HepG2 (cell line): ENCODE measurements at regions of chr2 and their contacts with region 1.

Region 1: DNA sequence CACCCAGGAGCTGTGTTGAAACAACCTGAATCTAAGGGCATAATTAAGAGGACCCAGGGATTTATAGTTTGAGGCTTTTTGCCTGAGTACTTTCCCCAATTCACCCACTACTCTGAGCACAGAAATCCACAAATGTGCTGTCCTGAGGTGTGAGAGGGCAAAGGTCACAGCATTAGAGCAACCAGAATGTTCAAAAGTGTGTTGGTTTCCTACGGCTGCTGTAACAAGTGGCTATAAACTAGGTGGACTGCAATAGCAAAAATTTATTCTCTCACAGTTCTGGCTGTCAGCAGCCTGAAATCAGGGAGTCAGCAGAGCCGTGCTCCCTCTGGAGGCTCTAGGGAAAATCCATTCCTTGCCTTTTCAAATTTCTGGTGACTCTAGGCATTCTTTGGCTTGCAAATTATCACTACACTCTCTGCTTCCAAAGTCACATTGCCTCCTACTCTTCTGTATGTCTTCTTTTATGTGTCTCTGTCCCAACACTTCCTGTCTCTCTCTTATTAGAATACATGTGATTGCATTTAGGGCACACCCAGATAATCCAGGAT is 91.4 kb upstream of the TACR1 start:
- DNase-seq: no peak
- ATAC-seq: peak; percentile 80
- H3K4me3 ChIP-seq: no peak overlapping the region
- H3K27ac ChIP-seq: no peak overlapping the region
- H3K4me1 ChIP-seq: 0 out of 2 replicates have a peak, but pooled peaks cover 4% of the 10 kb centered on the region
- H3K27me3 ChIP-seq: peaks cover 0 to 14% of the 10 kb centered on the region in 2 experiments; a peak in 1 of 5 replicates
- CTCF ChIP-seq: peak; percentile 51
- EP300 ChIP-seq: no peak
- POLR2A ChIP-seq: no peak
- RAD21 ChIP-seq: 0 out of 2 replicates have a peak, but pooled peaks have one; percentile 20

Region 2: DNA sequence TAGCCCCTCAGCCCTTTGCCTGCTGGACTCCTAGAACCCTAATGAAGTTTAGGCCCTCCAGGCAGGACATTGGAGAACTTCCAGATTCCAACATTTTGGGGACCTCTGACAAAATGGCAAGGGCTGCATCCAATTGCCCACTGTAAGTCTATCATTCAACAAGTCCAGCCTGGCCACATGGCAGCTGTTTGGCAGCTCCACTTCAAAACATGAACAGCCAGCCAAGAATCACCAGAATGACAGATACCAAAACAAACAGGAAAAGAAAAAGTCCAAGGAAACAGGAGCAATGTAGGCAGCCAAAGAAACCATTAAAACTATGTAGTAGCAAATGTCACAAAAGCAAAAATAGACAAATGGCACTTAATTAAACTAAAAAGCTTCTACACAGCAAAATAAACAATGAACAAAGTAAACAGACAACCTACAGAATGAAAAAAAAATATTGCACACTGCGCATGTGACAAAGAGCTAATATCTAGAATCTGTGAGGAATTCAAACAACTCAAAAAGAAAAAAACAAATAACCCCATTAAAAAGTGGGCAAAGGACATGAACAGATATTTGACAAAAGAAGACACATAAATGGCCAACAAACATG is 972.9 kb before region 1 on chr2:
- CTCF ChIA-PET with region 1: no interaction called
- POLR2A ChIA-PET with region 1: no interaction called
- in situ Hi-C with region 1: no loop called
- intact Hi-C with region 1: no loop called
- DNase-seq: no peak
- ATAC-seq: no peak
- H3K4me3 ChIP-seq: no peak overlapping the region
- H3K27ac ChIP-seq: no peak overlapping the region
- H3K4me1 ChIP-seq: peaks cover 14% of the 10 kb centered on the region; the same call in 1 of the 2 replicates
- H3K27me3 ChIP-seq: no peaks in the 10 kb centered on the region
- CTCF ChIP-seq: no peak
- EP300 ChIP-seq: no peak
- POLR2A ChIP-seq: no peak
- RAD21 ChIP-seq: no peak

Region 3: DNA sequence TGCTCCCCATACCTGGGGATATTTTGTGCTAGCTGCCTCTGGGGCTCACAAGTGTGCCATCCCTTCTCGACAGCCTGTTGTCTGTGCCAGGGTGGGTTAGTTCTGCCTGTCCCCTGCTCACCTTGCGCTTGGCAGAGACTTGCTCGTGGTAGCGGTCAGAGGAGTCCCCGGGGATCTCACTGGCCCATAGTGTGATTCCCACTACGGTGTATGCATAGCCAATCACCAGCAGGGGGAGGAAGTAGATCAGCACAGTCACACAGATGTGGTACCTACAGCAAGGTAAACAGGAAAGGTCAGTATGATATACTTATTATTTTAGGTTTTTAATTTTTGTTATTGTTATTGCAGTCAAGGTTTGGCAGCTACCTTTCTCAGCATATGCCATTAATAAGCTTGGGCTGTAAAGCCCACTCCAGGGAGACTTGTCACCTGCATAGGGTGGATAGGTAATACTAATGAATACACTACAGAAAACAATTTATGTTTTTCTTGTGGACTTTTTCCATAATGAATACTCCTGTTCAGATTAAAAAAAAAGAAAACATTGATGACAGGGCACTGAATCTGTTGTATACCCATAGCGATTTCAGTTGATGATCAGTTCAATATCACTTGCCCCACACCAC is 237.1 kb before region 1 on chr2:
- CTCF ChIA-PET with region 1: no interaction called
- POLR2A ChIA-PET with region 1: no interaction called
- in situ Hi-C with region 1: no loop called
- intact Hi-C with region 1: loop called (anchors 1 kb)
- DNase-seq: peak; percentile 65
- ATAC-seq: peak; percentile 100
- H3K4me3 ChIP-seq: no peak overlapping the region
- H3K27ac ChIP-seq: no peak overlapping the region
- H3K4me1 ChIP-seq: no peaks in the 10 kb centered on the region
- H3K27me3 ChIP-seq: no peaks in the 10 kb centered on the region
- CTCF ChIP-seq: peak; percentile 88
- EP300 ChIP-seq: no peak
- POLR2A ChIP-seq: no peak
- RAD21 ChIP-seq: 0 out of 2 replicates have a peak, but pooled peaks have one; percentile 27

Region 4: GRCh38 chr2:75130171-75130570 is 160.5 kb before region 1 on chr2:
- CTCF ChIA-PET with region 1: no interaction called
- POLR2A ChIA-PET with region 1: no interaction called
- in situ Hi-C with region 1: no loop called
- intact Hi-C with region 1: loop called (anchors 1 kb)
- DNase-seq: no peak
- ATAC-seq: peak; percentile 82
- H3K4me3 ChIP-seq: no peak overlapping the region
- H3K27ac ChIP-seq: no peak overlapping the region
- H3K4me1 ChIP-seq: no peaks in the 10 kb centered on the region
- H3K27me3 ChIP-seq: no peaks in the 10 kb centered on the region
- CTCF ChIP-seq: peak; percentile 68
- EP300 ChIP-seq: no peak
- POLR2A ChIP-seq: no peak
- RAD21 ChIP-seq: peak; percentile 52; the same call in 1 of the 2 replicates

Region 5: DNA sequence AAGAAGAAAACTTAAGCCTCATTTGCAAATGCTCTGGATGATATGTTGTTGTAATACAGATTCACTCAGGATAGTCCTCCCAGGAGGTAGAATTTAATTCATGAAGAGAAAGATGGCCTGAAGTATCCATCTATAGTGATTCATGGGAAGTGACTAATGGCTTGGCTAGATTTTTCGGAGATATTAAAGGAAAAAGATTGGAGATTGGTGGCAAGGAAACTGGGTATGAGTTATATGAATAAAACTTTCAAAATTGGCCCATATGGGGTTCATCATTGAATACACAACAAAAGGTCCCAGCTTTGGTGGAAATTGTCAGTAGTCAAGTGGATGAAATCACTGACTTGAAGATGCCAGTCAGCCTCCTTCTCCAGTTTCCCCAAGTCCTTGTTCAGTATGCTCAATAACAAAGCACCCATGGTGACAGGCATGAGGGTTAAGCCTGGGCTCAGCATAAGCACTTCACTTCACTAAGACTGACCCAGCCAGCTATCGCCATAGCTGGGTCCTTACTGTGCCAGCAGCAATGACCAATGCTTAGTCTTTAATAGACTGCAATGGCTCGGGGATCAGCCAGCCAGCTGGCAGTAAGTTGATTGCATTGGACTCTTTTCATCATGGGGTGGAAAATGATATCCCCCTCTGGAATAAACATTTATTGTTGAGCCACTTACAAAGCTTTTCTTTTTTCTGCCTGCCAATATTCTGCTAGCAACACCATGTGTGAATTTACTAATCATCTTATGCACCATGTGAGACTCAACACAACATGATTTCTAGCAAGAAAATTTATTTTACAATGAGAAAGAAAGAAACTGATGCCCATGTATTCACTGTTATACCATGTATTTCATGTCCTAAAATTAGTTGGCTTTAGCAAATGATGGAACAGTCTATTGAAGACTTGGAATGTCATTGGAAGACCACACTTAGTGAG is 85.2 kb after region 1 on chr2:
- CTCF ChIA-PET with region 1: no interaction called
- POLR2A ChIA-PET with region 1: no interaction called
- in situ Hi-C with region 1: no loop called
- intact Hi-C with region 1: no loop called
- DNase-seq: no peak
- ATAC-seq: no peak
- H3K4me3 ChIP-seq: no peak overlapping the region
- H3K27ac ChIP-seq: no peak overlapping the region
- H3K4me1 ChIP-seq: peaks cover 11% of the 10 kb centered on the region
- H3K27me3 ChIP-seq: no peaks in the 10 kb centered on the region; a peak in 1 of 5 replicates
- CTCF ChIP-seq: no peak
- EP300 ChIP-seq: no peak
- POLR2A ChIP-seq: no peak
- RAD21 ChIP-seq: no peak

Region 6: DNA sequence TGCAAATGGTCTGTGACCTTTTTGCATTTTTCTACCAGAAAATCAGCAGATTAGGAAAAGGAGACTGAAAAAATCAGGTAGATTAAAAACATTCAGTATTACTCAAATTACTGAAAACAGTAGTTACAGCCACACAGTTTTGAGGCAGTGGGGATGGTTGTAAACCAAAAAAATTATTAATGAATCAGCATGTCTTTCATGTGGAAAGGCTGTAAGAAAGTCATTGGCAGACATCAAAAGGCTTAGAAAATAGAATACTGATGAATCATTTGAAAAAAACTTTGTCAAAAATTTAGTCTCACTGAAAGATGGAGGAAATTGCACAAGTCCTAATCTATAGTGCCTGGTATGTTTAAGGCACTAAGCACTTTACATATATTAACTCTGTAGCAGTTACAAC is 554.0 kb after region 1 on chr2:
- CTCF ChIA-PET with region 1: no interaction called
- POLR2A ChIA-PET with region 1: no interaction called
- in situ Hi-C with region 1: no loop called
- intact Hi-C with region 1: no loop called
- DNase-seq: no peak
- ATAC-seq: no peak
- H3K4me3 ChIP-seq: no peak overlapping the region
- H3K27ac ChIP-seq: no peak overlapping the region
- H3K4me1 ChIP-seq: no peaks in the 10 kb centered on the region
- H3K27me3 ChIP-seq: no peaks in the 10 kb centered on the region
- CTCF ChIP-seq: no peak
- EP300 ChIP-seq: no peak
- POLR2A ChIP-seq: no peak
- RAD21 ChIP-seq: no peak